Activated T-helper 2 cell treated with anti-CD3 and anti-CD28 coated beads, Interferon-gamma antibody, Interleukin-2, Interleukin-4, amounts not matched to agents 10 μg/mL and 5 μg/mL and 100 μg/mL, durations not matched to agents 14 hours and 24 hours and 36 hours (primary cell): ENCODE measurements at regions of chr3 and their contacts with region 1.

Region 1: DNA sequence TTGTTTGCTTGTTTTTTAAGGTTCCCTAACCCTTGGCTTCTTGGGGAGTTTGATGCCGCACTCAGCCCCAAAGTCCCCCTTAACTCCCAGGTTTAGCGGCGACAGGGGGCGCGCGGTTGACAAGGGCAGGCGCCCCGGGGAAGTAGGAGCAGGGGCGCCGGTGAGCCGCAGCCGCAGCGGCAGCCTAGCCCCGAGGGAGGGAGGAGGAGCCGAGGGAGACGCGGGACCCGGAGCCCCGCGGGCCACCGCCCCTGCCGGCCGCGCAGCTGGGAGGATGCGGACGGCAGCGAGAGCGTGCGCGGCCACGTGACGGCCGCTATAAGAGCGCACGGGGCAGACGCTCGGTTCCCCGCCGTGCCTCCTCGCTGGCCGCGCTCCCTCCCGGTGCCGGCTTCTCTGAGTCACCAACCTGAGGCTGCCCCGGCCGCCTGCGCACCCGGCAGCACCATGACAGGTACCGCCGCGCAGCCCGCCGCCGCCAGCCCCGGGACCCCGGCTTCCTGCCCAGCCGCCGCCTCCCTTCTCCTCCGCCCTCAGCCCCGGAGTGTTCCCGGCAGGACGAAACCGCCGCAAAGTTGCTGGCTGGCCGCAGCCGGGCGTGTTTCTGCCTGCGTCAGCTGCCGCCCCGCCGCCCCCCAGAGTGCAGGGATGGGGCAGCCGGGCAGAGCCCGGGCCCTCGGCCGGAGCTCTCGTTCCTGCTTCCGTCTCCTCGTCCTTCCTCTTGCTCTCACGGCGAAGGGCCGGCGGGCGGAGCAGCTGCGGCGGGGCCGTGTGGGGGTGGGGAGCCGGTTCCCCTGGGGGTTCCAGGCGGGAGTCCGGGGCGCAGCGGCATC is at the start of gene GYG1:
- DNase-seq: peak; percentile 73
- H3K4me3 Mint-ChIP-seq: peak within 1 kb of the TSS; percentile 82
- H3K27ac Mint-ChIP-seq: peak within 1 kb of the TSS; percentile 82
- H3K4me1 Mint-ChIP-seq: peaks cover 26% of the 10 kb centered on the region
- H3K27me3 Mint-ChIP-seq: no peaks in the 10 kb centered on the region
- total RNA-seq, gene GYG1: 25.2 and 25.3 TPM in 2 replicates

Region 2: GRCh38 chr3:148955544-148956346 is 35.7 kb before region 1 on chr3:
- intact Hi-C with region 1: no loop called
- DNase-seq: no peak
- H3K4me3 Mint-ChIP-seq: no peak overlapping the region
- H3K27ac Mint-ChIP-seq: no peak overlapping the region
- H3K4me1 Mint-ChIP-seq: peaks cover 10% of the 10 kb centered on the region
- H3K27me3 Mint-ChIP-seq: peaks cover 11% of the 10 kb centered on the region

Region 3: DNA sequence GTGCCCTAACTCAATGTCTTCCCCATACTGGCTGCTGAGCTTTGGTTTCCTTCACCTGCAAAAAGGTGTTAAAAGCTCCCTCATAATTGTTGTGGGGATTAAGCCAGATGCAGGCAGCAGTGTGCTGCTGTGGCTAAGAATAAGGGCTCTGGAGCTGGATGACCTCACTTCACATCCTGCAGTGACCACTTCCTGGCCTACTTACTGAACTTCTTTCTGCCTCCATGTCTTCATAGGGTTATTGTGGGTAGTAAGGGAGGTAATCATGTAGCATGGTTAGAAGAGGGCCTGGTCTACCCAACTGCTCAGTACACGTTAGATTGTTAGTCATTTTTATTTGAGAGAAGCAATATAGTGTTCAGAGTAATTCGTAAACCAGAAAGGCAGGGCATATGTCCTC is 18.3 kb after region 1 on chr3:
- intact Hi-C with region 1: loop called (anchors 2 kb)
- DNase-seq: peak; percentile 30
- H3K4me3 Mint-ChIP-seq: no peak overlapping the region
- H3K27ac Mint-ChIP-seq: peak overlapping the region; percentile 67
- H3K4me1 Mint-ChIP-seq: peaks cover 22% of the 10 kb centered on the region
- H3K27me3 Mint-ChIP-seq: no peaks in the 10 kb centered on the region

Region 4: GRCh38 chr3:149042789-149043386 is 51.5 kb after region 1 on chr3:
- intact Hi-C with region 1: loop called (anchors 2 kb)
- DNase-seq: no peak
- H3K4me3 Mint-ChIP-seq: peak overlapping the region; percentile 28
- H3K27ac Mint-ChIP-seq: peak overlapping the region; percentile 49
- H3K4me1 Mint-ChIP-seq: peaks cover 23% of the 10 kb centered on the region
- H3K27me3 Mint-ChIP-seq: no peaks in the 10 kb centered on the region

Region 5: GRCh38 chr3:149086232-149086988 is 95.0 kb after region 1 on chr3 and contains the start of gene HLTF:
- intact Hi-C with region 1: loop called (anchors 1 kb)
- DNase-seq: peak; percentile 88
- H3K4me3 Mint-ChIP-seq: peak within 1 kb of the TSS; percentile 93
- H3K27ac Mint-ChIP-seq: peak within 1 kb of the TSS; percentile 79
- H3K4me1 Mint-ChIP-seq: peaks cover 27% of the 10 kb centered on the region
- H3K27me3 Mint-ChIP-seq: no peaks in the 10 kb centered on the region
- total RNA-seq, gene HLTF: 20.8 and 23.9 TPM in 2 replicates

Region 6: GRCh38 chr3:149129326-149130205 is 138.2 kb after region 1 on chr3 and contains the start of gene HPS3:
- intact Hi-C with region 1: loop called (anchors 1 kb)
- DNase-seq: peak; percentile 81
- H3K4me3 Mint-ChIP-seq: peak within 1 kb of the TSS; percentile 90
- H3K27ac Mint-ChIP-seq: peak within 1 kb of the TSS; percentile 81
- H3K4me1 Mint-ChIP-seq: peaks cover 32% of the 10 kb centered on the region
- H3K27me3 Mint-ChIP-seq: peaks cover 21% of the 10 kb centered on the region
- total RNA-seq, gene HPS3: 20.2 and 24.4 TPM in 2 replicates

Region 7: GRCh38 chr3:149245738-149246451 is 254.5 kb after region 1 on chr3:
- intact Hi-C with region 1: loop called (anchors 5 kb)
- DNase-seq: no peak
- H3K4me3 Mint-ChIP-seq: no peak overlapping the region
- H3K27ac Mint-ChIP-seq: peak overlapping the region; percentile 21
- H3K4me1 Mint-ChIP-seq: peaks cover 39% of the 10 kb centered on the region
- H3K27me3 Mint-ChIP-seq: peaks cover 7% of the 10 kb centered on the region